GM12878 (cell line): ENCODE measurements at regions of chr2 and their contacts with region 1.

Region 1: DNA sequence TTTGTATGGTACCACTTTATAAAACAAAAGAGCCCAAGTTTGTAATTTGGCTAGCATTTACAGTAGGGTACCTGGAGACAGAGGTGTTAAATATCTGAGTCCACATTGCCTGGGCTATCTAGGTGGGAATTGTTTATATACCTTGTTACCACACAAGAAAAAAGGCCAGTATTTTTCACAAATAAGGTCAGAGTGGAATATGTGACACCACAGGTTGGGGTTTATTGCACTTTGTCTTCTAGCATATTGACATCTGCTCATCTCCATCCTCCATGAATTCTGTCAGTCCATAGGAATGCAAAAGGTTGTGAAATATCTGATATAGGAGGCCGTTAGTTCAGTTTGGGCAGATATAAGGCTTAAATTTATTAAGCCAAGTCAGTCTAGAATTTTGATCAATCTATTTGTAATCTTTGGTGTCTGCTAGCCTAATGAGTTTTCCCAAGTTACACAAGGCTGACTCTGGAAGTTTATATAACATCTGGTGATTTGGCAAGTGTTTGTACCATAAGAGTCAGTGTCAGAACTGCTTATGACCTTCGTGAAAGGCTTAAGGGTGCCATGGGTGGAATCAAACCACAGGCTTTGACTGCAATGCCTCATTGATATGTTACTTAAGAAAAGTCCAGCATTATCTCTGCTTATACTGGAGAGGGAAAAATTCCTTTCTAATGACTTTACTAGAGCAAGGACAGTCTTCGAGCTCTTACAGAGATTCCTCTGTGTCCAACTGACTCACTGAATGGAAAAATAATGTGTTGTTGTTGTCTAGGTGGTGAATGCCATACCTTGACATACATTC is 11.3 kb upstream of the DPP4 start:
- DNase-seq: no peak
- ATAC-seq: no peak
- H3K4me3 ChIP-seq: no peak overlapping the region
- H3K27ac ChIP-seq: no peak overlapping the region
- H3K4me1 ChIP-seq: no peaks in the 10 kb centered on the region
- H3K27me3 ChIP-seq: no peaks in the 10 kb centered on the region; a peak in 1 of 4 replicates
- CTCF ChIP-seq: no peak
- EP300 ChIP-seq: no peak
- POLR2A ChIP-seq: no peak
- RAD21 ChIP-seq: no peak

Region 2: DNA sequence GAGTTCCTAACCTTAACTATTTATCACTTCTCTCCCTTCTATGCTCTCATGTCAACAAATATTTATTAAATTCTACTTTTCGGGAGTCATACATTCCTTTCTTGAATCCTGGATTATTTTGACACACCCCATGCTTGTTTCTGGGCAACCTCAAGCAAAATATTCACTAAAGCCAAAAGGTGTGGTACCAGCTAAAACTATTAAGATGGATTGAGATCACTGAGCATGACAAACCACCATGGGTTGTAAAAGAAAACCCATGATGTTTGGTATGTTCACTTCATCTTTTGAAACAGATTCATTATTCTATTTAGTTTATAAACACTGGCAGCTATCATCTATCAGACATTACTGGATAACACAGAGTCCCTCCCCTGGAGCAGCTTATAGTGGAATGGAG is 43.8 kb before region 1 on chr2:
- CTCF ChIA-PET with region 1: no interaction called
- POLR2A ChIA-PET with region 1: no interaction called
- RAD21 ChIA-PET with region 1: no interaction called
- SMC1A ChIA-PET with region 1: interaction called, 3 read pairs
- in situ Hi-C with region 1: no loop called
- intact Hi-C with region 1: loop called (anchors 5 kb)
- DNase-seq: no peak
- ATAC-seq: no peak
- H3K4me3 ChIP-seq: no peak overlapping the region
- H3K27ac ChIP-seq: no peak overlapping the region
- H3K4me1 ChIP-seq: no peaks in the 10 kb centered on the region
- H3K27me3 ChIP-seq: no peaks in the 10 kb centered on the region
- CTCF ChIP-seq: no peak
- EP300 ChIP-seq: no peak
- POLR2A ChIP-seq: no peak
- RAD21 ChIP-seq: no peak

Region 3: GRCh38 chr2:162308752-162309503 is 223.6 kb after region 1 on chr2:
- CTCF ChIA-PET with region 1: no interaction called
- POLR2A ChIA-PET with region 1: no interaction called
- RAD21 ChIA-PET with region 1: no interaction called
- SMC1A ChIA-PET with region 1: no interaction called
- in situ Hi-C with region 1: no loop called
- intact Hi-C with region 1: no loop called
- DNase-seq: no peak
- ATAC-seq: peak; percentile 51
- H3K4me3 ChIP-seq: no peak overlapping the region
- H3K27ac ChIP-seq: no peak overlapping the region
- H3K4me1 ChIP-seq: peaks cover 6% of the 10 kb centered on the region
- H3K27me3 ChIP-seq: no peaks in the 10 kb centered on the region
- CTCF ChIP-seq: no peak
- EP300 ChIP-seq: no peak
- POLR2A ChIP-seq: no peak
- RAD21 ChIP-seq: no peak